CD4-positive, alpha-beta memory T cell (primary cell): ENCODE measurements at regions of chr5 and their contacts with region 1.

Region 1: GRCh38 chr5:57298295-57298984 is 124.6 kb downstream of the GPBP1 start:
- DNase-seq: peak; percentile 78 to 86 (median 83)
- H3K4me3 ChIP-seq: peak overlapping the region; percentile 12 to 14
- H3K4me3 Mint-ChIP-seq: peak overlapping the region; percentile 69 to 87 (median 80)
- H3K27ac ChIP-seq: no peak overlapping the region
- H3K27ac Mint-ChIP-seq: peak overlapping the region; percentile 15 to 90 (median 74)
- H3K4me1 ChIP-seq: peaks cover 6% of the 10 kb centered on the region
- H3K4me1 Mint-ChIP-seq: peaks cover 9 to 26% (median 18%) of the 10 kb centered on the region in 4 donors
- H3K27me3 ChIP-seq: no peaks in the 10 kb centered on the region
- H3K27me3 Mint-ChIP-seq: no peaks in the 10 kb centered on the region

Region 2: GRCh38 chr5:56900858-56901578 is 397.4 kb before region 1 on chr5:
- CTCF ChIA-PET with region 1: interaction called, 6 read pairs
- POLR2A ChIA-PET with region 1: no interaction called
- intact Hi-C with region 1: loop called (anchors 5 kb)
- DNase-seq: peak in 4 of 5 donors; percentile 43 to 64 (median 54)
- H3K4me3 ChIP-seq: no peak overlapping the region
- H3K4me3 Mint-ChIP-seq: no peak overlapping the region
- H3K27ac ChIP-seq: no peak overlapping the region
- H3K27ac Mint-ChIP-seq: no peak overlapping the region
- H3K4me1 ChIP-seq: no peaks in the 10 kb centered on the region
- H3K4me1 Mint-ChIP-seq: peaks cover 2 to 6% (median 4%) of the 10 kb centered on the region in 4 donors
- H3K27me3 ChIP-seq: no peaks in the 10 kb centered on the region
- H3K27me3 Mint-ChIP-seq: no peaks in the 10 kb centered on the region

Region 3: GRCh38 chr5:57055731-57056130 is 242.7 kb before region 1 on chr5:
- CTCF ChIA-PET with region 1: no interaction called
- POLR2A ChIA-PET with region 1: no interaction called
- intact Hi-C with region 1: no loop called
- DNase-seq: no peak
- H3K4me3 ChIP-seq: no peak overlapping the region
- H3K4me3 Mint-ChIP-seq: no peak overlapping the region
- H3K27ac ChIP-seq: no peak overlapping the region
- H3K27ac Mint-ChIP-seq: no peak overlapping the region
- H3K4me1 ChIP-seq: no peaks in the 10 kb centered on the region
- H3K4me1 Mint-ChIP-seq: no peaks in the 10 kb centered on the region
- H3K27me3 ChIP-seq: no peaks in the 10 kb centered on the region
- H3K27me3 Mint-ChIP-seq: peaks cover 0 to 2% of the 10 kb centered on the region in 2 donors

Region 4: GRCh38 chr5:57494104-57495098 is 196.0 kb after region 1 on chr5:
- CTCF ChIA-PET with region 1: interaction called, 23 read pairs
- POLR2A ChIA-PET with region 1: no interaction called
- intact Hi-C with region 1: loop called (anchors 1 kb)
- DNase-seq: peak in 2 of 5 donors; percentile 7 to 42
- H3K4me3 ChIP-seq: no peak overlapping the region
- H3K4me3 Mint-ChIP-seq: peak overlapping the region in 7 of 8 donors; percentile 2 to 77 (median 52)
- H3K27ac ChIP-seq: no peak overlapping the region
- H3K27ac Mint-ChIP-seq: peak overlapping the region; percentile 82 to 93 (median 89)
- H3K4me1 ChIP-seq: peaks cover 35% of the 10 kb centered on the region
- H3K4me1 Mint-ChIP-seq: peaks cover 18 to 44% (median 30%) of the 10 kb centered on the region in 4 donors
- H3K27me3 ChIP-seq: no peaks in the 10 kb centered on the region
- H3K27me3 Mint-ChIP-seq: peaks cover 0 to 2% of the 10 kb centered on the region in 2 donors

Region 5: GRCh38 chr5:57499262-57500050 is 201.0 kb after region 1 on chr5:
- CTCF ChIA-PET with region 1: interaction called, 23 read pairs
- POLR2A ChIA-PET with region 1: no interaction called
- intact Hi-C with region 1: loop called (anchors 1 kb)
- DNase-seq: peak in 4 of 5 donors; percentile 15 to 34 (median 32)
- H3K4me3 ChIP-seq: no peak overlapping the region
- H3K4me3 Mint-ChIP-seq: peak overlapping the region; percentile 63 to 82 (median 74)
- H3K27ac ChIP-seq: no peak overlapping the region
- H3K27ac Mint-ChIP-seq: peak overlapping the region in 5 of 7 donors; percentile 0 to 79 (median 49)
- H3K4me1 ChIP-seq: peaks cover 27% of the 10 kb centered on the region
- H3K4me1 Mint-ChIP-seq: peaks cover 15 to 31% (median 16%) of the 10 kb centered on the region in 4 donors
- H3K27me3 ChIP-seq: no peaks in the 10 kb centered on the region
- H3K27me3 Mint-ChIP-seq: peaks cover 0 to 2% of the 10 kb centered on the region in 2 donors

Region 6: GRCh38 chr5:57772512-57772911 is 474.1 kb after region 1 on chr5:
- CTCF ChIA-PET with region 1: interaction called, 4 read pairs
- POLR2A ChIA-PET with region 1: no interaction called
- intact Hi-C with region 1: loop called (anchors 2 kb)
- DNase-seq: peak in 1 of 5 donors; percentile 10
- H3K4me3 ChIP-seq: no peak overlapping the region
- H3K4me3 Mint-ChIP-seq: no peak overlapping the region
- H3K27ac ChIP-seq: no peak overlapping the region
- H3K27ac Mint-ChIP-seq: peak overlapping the region in 1 of 7 donors; percentile 43
- H3K4me1 ChIP-seq: peaks cover 7% of the 10 kb centered on the region
- H3K4me1 Mint-ChIP-seq: no peaks in the 10 kb centered on the region
- H3K27me3 ChIP-seq: no peaks in the 10 kb centered on the region
- H3K27me3 Mint-ChIP-seq: peaks cover 0 to 6% of the 10 kb centered on the region in 2 donors

Region 7: DNA sequence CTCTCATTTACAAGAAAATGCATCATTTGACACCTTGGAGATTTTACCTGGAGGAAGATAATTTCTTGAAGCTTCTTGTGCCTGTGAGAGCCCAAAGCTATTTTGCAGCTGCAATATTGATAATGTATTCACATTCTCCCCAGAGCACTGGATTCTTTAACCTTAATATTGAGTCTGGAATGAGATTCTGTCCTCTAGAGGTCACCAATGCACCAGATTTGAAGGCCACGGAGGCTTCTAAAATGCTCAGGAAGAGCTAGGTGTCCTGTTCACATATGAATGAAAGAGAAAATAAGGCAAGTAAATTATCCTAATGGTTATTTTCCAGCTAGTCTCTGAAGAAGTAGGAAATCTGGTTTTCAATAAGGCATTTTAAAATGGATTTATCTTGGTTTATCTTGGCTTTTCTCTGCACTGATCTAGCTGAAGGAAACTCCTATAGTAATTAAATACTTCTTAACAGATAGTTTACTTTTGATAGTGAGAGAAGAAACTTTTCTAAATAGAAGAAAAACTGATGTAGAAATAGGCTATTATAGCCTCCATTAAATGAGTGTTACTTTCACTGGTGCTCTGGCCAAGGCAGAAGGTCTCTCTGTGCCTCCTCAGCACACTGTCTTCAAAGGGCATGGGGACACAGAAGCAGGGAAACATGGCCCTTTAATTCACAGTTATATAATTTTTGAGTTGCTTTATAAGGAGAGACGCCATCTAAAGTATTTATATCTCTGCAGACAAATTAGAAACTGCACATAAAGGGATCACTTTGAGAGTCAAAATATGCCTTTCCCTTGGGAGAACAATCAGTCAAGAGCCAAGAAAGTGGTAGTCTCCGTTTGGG is 481.2 kb after region 1 on chr5:
- CTCF ChIA-PET with region 1: interaction called, 4 read pairs
- POLR2A ChIA-PET with region 1: no interaction called
- intact Hi-C with region 1: loop called (anchors 1 kb)
- DNase-seq: peak in 3 of 5 donors; percentile 13 to 17 (median 14)
- H3K4me3 ChIP-seq: no peak overlapping the region
- H3K4me3 Mint-ChIP-seq: no peak overlapping the region
- H3K27ac ChIP-seq: no peak overlapping the region
- H3K27ac Mint-ChIP-seq: no peak overlapping the region
- H3K4me1 ChIP-seq: no peaks in the 10 kb centered on the region
- H3K4me1 Mint-ChIP-seq: no peaks in the 10 kb centered on the region
- H3K27me3 ChIP-seq: no peaks in the 10 kb centered on the region
- H3K27me3 Mint-ChIP-seq: peaks cover 0 to 3% of the 10 kb centered on the region in 2 donors

Region 8: DNA sequence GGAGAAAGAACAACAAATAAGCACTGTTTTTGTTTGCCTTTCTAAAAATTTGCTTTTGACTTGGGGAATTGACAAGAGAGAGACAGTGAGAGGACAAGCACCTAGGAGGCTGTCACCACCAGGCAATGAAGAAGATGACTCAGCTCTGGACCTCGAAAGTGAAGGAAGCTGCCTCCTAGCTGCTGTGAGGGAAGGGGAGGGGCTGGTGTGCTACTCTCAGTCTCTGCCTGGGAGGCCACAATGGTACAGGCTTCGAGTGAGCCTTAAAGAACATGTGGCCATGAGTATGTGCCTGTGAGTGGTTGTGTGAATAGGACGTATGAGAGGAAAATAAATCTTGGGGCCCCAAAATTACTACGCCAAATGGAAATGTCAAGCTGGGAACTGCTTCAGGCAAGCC is 1168.5 kb after region 1 on chr5:
- CTCF ChIA-PET with region 1: interaction called, 176 read pairs
- POLR2A ChIA-PET with region 1: interaction called, 34 read pairs
- intact Hi-C with region 1: no loop called
- DNase-seq: no peak
- H3K4me3 ChIP-seq: no peak overlapping the region
- H3K4me3 Mint-ChIP-seq: no peak overlapping the region
- H3K27ac ChIP-seq: no peak overlapping the region
- H3K27ac Mint-ChIP-seq: no peak overlapping the region
- H3K4me1 ChIP-seq: no peaks in the 10 kb centered on the region
- H3K4me1 Mint-ChIP-seq: peaks cover 0 to 1% (median 0%) of the 10 kb centered on the region in 4 donors
- H3K27me3 ChIP-seq: no peaks in the 10 kb centered on the region
- H3K27me3 Mint-ChIP-seq: peaks cover 2 to 4% of the 10 kb centered on the region in 2 donors